ENCODE measurements at regions of chr12 and their contacts with region 1.

Region 1: GRCh38 chr12:91811481-91812287 is 334.0 kb downstream of the BTG1 start:
- DNase-seq: peak; percentile 40
- ATAC-seq: peak; percentile 95
- H3K4me3 ChIP-seq: no peak overlapping the region
- H3K27ac ChIP-seq: no peak overlapping the region
- H3K4me1 ChIP-seq: no peaks in the 10 kb centered on the region
- H3K27me3 ChIP-seq: no peaks in the 10 kb centered on the region
- CTCF ChIP-seq: peak; percentile 68 to 86 (median 79)
- EP300 ChIP-seq: no peak
- POLR2A ChIP-seq: no peak
- RAD21 ChIP-seq: peak; percentile 87

Region 2: GRCh38 chr12:91523831-91524230 is 287.9 kb before region 1 on chr12:
- CTCF ChIA-PET with region 1: no interaction called
- POLR2A ChIA-PET with region 1: no interaction called
- RAD21 ChIA-PET with region 1: no interaction called
- SMC1A ChIA-PET with region 1: no interaction called
- in situ Hi-C with region 1: no loop called
- intact Hi-C with region 1: no loop called
- DNase-seq: no peak
- ATAC-seq: no peak
- H3K4me3 ChIP-seq: no peak overlapping the region
- H3K27ac ChIP-seq: no peak overlapping the region
- H3K4me1 ChIP-seq: no peaks in the 10 kb centered on the region
- H3K27me3 ChIP-seq: no peaks in the 10 kb centered on the region
- CTCF ChIP-seq: no peak
- EP300 ChIP-seq: no peak
- POLR2A ChIP-seq: no peak
- RAD21 ChIP-seq: no peak

Region 3: GRCh38 chr12:91577586-91578539 is 233.8 kb before region 1 on chr12:
- CTCF ChIA-PET with region 1: interaction called, 14 read pairs
- POLR2A ChIA-PET with region 1: no interaction called
- RAD21 ChIA-PET with region 1: interaction called, 8 read pairs
- SMC1A ChIA-PET with region 1: interaction called, 9 read pairs
- in situ Hi-C with region 1: no loop called
- intact Hi-C with region 1: no loop called
- DNase-seq: no peak
- ATAC-seq: peak; percentile 73
- H3K4me3 ChIP-seq: no peak overlapping the region; the same call in 1 of the 2 replicates
- H3K27ac ChIP-seq: no peak overlapping the region
- H3K4me1 ChIP-seq: no peaks in the 10 kb centered on the region
- H3K27me3 ChIP-seq: no peaks in the 10 kb centered on the region
- CTCF ChIP-seq: peak; percentile 36 to 51 (median 41); a peak in 3 of 6 replicates
- EP300 ChIP-seq: no peak
- POLR2A ChIP-seq: no peak
- RAD21 ChIP-seq: peak; percentile 47; the same call in 1 of the 2 replicates

Region 4: GRCh38 chr12:91825999-91826398 is 14.3 kb after region 1 on chr12:
- CTCF ChIA-PET with region 1: interaction called, 23 read pairs
- POLR2A ChIA-PET with region 1: no interaction called
- RAD21 ChIA-PET with region 1: interaction called, 10 read pairs
- SMC1A ChIA-PET with region 1: interaction called, 19 read pairs
- in situ Hi-C with region 1: no loop called
- intact Hi-C with region 1: no loop called
- DNase-seq: no peak
- ATAC-seq: no peak
- H3K4me3 ChIP-seq: no peak overlapping the region
- H3K27ac ChIP-seq: no peak overlapping the region
- H3K4me1 ChIP-seq: no peaks in the 10 kb centered on the region
- H3K27me3 ChIP-seq: no peaks in the 10 kb centered on the region
- CTCF ChIP-seq: no peak
- EP300 ChIP-seq: no peak
- POLR2A ChIP-seq: no peak
- RAD21 ChIP-seq: no peak

Region 5: DNA sequence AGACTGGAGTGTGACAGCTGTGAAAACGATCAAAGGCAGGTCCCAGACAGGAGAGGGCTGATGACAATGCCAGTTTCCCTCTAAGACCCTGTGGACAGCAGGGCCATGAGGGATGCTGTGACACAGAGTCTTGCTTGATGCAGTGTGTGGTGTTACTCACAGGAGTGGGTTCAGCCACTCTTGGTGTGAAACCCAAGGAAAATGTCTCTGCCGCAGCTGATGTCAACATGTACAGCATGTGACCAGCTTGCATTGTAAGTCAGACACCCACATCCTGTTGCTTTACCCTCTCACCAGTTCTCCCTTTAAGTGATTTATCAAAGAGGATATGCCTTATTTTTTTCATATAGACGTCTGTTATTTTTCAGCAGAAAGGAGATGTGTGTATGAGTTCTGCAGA is 65.3 kb after region 1 on chr12:
- CTCF ChIA-PET with region 1: interaction called, 14 read pairs
- POLR2A ChIA-PET with region 1: interaction called, 3 read pairs
- RAD21 ChIA-PET with region 1: interaction called, 9 read pairs
- SMC1A ChIA-PET with region 1: interaction called, 4 read pairs
- in situ Hi-C with region 1: no loop called
- intact Hi-C with region 1: no loop called
- DNase-seq: peak; percentile 20
- ATAC-seq: peak; percentile 95
- H3K4me3 ChIP-seq: no peak overlapping the region
- H3K27ac ChIP-seq: no peak overlapping the region
- H3K4me1 ChIP-seq: no peaks in the 10 kb centered on the region
- H3K27me3 ChIP-seq: no peaks in the 10 kb centered on the region
- CTCF ChIP-seq: no peak
- EP300 ChIP-seq: peak; percentile 83 to 87; a peak in 3 of 4 replicates
- POLR2A ChIP-seq: no peak
- RAD21 ChIP-seq: no peak

Region 6: DNA sequence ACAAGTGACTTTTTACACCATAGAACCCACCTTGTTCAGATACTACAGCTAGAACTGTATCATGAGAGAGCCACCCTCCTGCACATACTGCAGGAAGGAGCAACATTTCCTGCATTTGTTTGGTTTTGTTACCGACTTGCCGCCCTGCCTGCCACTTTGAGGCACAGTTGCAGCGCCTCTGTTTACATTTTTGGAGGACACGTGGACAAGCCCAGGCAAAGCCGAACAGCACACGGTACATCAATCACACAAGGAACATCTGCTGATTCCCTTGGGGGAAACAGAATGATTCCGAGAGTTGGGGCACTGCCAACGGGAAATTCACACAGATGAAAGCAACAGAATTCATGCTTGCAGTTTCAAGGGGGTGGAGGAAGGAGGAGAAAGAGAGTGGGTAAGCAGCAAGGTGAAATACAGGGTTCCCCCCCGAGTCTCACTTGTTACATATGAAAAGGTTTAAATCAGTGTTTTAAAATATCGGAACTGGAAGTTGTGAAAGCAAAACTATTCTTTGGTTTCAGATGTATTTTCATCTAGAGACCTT is 223.2 kb after region 1 on chr12:
- CTCF ChIA-PET with region 1: interaction called, 10 read pairs
- POLR2A ChIA-PET with region 1: no interaction called
- RAD21 ChIA-PET with region 1: no interaction called
- SMC1A ChIA-PET with region 1: interaction called, 14 read pairs
- in situ Hi-C with region 1: no loop called
- intact Hi-C with region 1: loop called (anchors 5 kb)
- DNase-seq: peak; percentile 99
- ATAC-seq: peak; percentile 84
- H3K4me3 ChIP-seq: peak overlapping the region; percentile 27
- H3K27ac ChIP-seq: peak overlapping the region; percentile 80
- H3K4me1 ChIP-seq: peaks cover 13% of the 10 kb centered on the region
- H3K27me3 ChIP-seq: no peaks in the 10 kb centered on the region
- CTCF ChIP-seq: no peak
- EP300 ChIP-seq: peak; percentile 89 to 90
- POLR2A ChIP-seq: peak; percentile 36; the same call in 1 of the 2 replicates
- RAD21 ChIP-seq: peak; percentile 41

Region 7: GRCh38 chr12:92369643-92370042 is 558.0 kb after region 1 on chr12:
- CTCF ChIA-PET with region 1: no interaction called
- POLR2A ChIA-PET with region 1: no interaction called
- RAD21 ChIA-PET with region 1: no interaction called
- SMC1A ChIA-PET with region 1: no interaction called
- in situ Hi-C with region 1: no loop called
- intact Hi-C with region 1: no loop called
- DNase-seq: no peak
- ATAC-seq: no peak
- H3K4me3 ChIP-seq: no peak overlapping the region
- H3K27ac ChIP-seq: no peak overlapping the region
- H3K4me1 ChIP-seq: peaks cover 19% of the 10 kb centered on the region
- H3K27me3 ChIP-seq: no peaks in the 10 kb centered on the region
- CTCF ChIP-seq: no peak
- EP300 ChIP-seq: no peak
- POLR2A ChIP-seq: no peak
- RAD21 ChIP-seq: no peak

Region 8: GRCh38 chr12:92649511-92650227 is 838.0 kb after region 1 on chr12:
- CTCF ChIA-PET with region 1: interaction called, 35 read pairs
- POLR2A ChIA-PET with region 1: no interaction called
- RAD21 ChIA-PET with region 1: interaction called, 12 read pairs
- SMC1A ChIA-PET with region 1: interaction called, 15 read pairs
- in situ Hi-C with region 1: no loop called
- intact Hi-C with region 1: loop called (anchors 5 kb)
- DNase-seq: peak; percentile 67
- ATAC-seq: peak; percentile 98
- H3K4me3 ChIP-seq: no peak overlapping the region
- H3K27ac ChIP-seq: no peak overlapping the region
- H3K4me1 ChIP-seq: no peaks in the 10 kb centered on the region
- H3K27me3 ChIP-seq: no peaks in the 10 kb centered on the region
- CTCF ChIP-seq: peak; percentile 72 to 85 (median 76); a peak in 5 of 6 replicates
- EP300 ChIP-seq: no peak
- POLR2A ChIP-seq: no peak
- RAD21 ChIP-seq: peak; percentile 96

Region 9: GRCh38 chr12:93256256-93256969 is 1444.7 kb after region 1 on chr12:
- CTCF ChIA-PET with region 1: no interaction called
- POLR2A ChIA-PET with region 1: no interaction called
- RAD21 ChIA-PET with region 1: no interaction called
- SMC1A ChIA-PET with region 1: no interaction called
- in situ Hi-C with region 1: no loop called
- intact Hi-C with region 1: no loop called
- DNase-seq: no peak
- ATAC-seq: no peak
- H3K4me3 ChIP-seq: no peak overlapping the region
- H3K27ac ChIP-seq: no peak overlapping the region
- H3K4me1 ChIP-seq: no peaks in the 10 kb centered on the region
- H3K27me3 ChIP-seq: no peaks in the 10 kb centered on the region
- CTCF ChIP-seq: no peak
- EP300 ChIP-seq: no peak
- POLR2A ChIP-seq: no peak
- RAD21 ChIP-seq: no peak